ENCODE measurements at regions of chr12 and their contacts with region 1.

Region 1: GRCh38 chr12:106282457-106283097 is 20.0 kb upstream of the TCP11L2 start:
- DNase-seq: peak; percentile 62
- CTCF ChIP-seq: peak; percentile 55

Region 2: GRCh38 chr12:106211973-106212372 is 70.6 kb before region 1 on chr12:
- CTCF ChIA-PET with region 1: no interaction called
- POLR2A ChIA-PET with region 1: no interaction called
- DNase-seq: no peak
- CTCF ChIP-seq: no peak

Region 3: DNA sequence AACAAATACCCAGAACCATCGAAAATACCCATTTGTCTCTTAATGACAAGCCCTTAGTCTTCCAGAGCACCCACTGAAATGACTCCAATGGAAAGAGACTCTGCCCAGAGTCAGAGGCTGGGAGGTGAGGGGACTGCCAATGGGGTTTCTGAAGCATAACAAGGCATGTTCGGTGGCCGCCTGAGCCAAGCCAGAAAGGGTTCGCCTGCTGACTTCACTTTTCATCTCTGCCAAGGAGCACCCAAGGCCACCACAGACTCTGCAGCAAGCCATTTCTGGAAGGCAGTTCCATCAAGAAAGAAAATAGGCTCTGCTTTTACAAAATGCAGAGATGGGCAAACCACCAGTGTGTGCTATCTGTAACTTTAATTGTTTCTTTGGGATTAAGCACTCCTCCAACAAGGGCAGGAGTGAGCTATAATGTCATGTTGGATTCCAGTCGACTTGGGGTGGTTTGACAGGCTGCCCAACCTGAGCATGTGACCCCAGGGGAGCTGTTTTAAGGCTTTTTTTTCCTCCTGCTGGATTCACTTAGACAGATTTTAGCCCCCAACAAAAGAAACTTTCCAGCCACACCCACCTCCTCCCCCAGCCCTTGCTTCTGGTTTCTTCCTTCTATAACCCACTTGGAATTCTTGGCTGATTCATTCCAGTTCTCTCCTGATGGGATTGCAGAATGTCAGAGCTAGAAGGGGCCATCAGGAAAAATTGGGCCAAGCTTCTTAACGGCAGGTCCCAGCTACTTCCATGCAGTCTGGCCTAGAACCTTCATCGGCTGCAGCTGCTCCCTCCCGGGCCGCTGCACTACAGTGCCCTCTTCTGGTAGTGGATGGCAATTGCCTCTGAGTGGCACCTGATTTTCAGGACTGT is 58.9 kb before region 1 on chr12:
- CTCF ChIA-PET with region 1: interaction called, 42 read pairs
- POLR2A ChIA-PET with region 1: no interaction called
- DNase-seq: peak; percentile 83
- CTCF ChIP-seq: peak; percentile 99

Region 4: GRCh38 chr12:106234449-106234848 is 48.1 kb before region 1 on chr12:
- CTCF ChIA-PET with region 1: interaction called, 42 read pairs
- POLR2A ChIA-PET with region 1: no interaction called
- DNase-seq: no peak
- CTCF ChIP-seq: no peak

Region 5: GRCh38 chr12:106249411-106250135 is 33.0 kb before region 1 on chr12:
- CTCF ChIA-PET with region 1: interaction called, 15 read pairs
- POLR2A ChIA-PET with region 1: no interaction called
- DNase-seq: peak; percentile 62
- CTCF ChIP-seq: no peak

Region 6: DNA sequence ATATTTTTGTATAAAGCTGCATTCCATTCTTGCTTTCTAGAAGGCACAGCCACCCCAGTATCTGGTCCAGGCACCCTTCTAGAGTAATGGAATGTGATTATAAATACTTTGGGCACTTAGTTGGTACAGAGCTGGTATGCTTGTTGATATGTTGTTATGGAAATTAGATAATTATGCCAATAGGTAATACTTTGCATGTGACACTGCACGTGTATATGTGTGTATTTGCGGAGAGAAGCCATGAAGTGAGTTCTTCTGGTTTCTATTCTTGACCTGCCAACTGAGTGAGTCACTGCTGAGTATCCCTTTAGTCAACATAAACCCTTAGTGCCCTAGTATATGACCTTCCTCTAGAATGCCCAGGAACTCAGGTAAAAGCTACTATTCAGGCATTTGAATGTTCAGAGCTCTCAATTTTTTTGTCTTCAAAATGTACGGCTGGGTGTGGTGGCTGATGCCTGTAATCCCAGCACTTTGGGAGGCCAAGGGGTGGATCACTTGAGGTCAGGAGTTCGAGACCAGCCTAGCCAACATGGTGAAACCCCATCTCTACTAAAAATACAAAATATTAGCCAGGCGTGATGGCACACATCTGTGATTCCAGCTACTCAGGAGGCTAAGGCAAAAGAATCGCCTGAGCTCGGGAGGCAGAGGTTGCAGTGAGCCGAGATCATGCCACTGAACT is 13.8 kb after region 1 on chr12:
- CTCF ChIA-PET with region 1: interaction called, 61 read pairs
- POLR2A ChIA-PET with region 1: no interaction called
- DNase-seq: no peak
- CTCF ChIP-seq: no peak

Region 7: DNA sequence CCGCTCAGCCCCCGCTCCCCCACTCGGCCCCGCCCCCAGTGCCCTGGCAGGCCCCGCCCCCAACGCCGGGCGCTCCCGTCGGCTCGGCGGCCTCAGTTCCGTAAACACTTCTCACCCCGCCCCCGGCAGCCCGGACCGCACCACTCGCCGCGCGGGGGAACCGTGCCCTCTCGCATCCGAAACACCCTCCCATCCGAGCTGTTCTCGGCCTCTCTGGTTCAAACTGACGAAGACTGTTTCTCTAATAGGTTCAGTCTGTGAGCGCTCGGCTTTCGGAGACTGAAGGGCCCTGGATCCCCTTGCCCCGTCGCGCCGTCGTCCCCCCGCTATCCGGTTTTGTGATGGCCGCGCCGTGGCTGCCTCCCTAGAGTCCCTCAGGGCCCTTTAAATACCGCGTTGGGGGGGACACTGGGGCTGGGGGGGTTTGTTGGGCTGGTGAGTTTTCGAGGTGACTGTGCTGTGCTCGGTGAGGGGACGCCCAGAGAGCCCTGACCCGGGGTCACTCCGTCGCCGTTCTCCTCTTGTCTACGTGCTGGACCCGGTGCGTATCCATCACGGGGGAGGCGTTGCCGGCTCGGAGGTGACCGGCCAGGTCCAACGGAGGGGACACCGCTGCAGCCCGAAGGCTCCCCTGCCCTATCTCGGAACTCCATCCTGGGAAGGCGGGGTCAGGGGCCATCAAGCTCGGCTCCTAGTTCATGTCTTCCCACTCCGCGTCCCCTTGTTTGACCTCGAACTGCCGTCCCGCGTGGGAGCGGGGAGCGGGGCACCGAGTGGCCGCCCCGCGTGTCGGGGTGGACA is 20.0 kb after region 1 on chr12 and contains the start of gene TCP11L2:
- CTCF ChIA-PET with region 1: interaction called, 61 read pairs
- POLR2A ChIA-PET with region 1: no interaction called
- DNase-seq: peak; percentile 95
- CTCF ChIP-seq: no peak

Measured in GM10248 (cell line).